ENCODE measurements at regions of chr1 and their contacts with region 1.

Region 1: DNA sequence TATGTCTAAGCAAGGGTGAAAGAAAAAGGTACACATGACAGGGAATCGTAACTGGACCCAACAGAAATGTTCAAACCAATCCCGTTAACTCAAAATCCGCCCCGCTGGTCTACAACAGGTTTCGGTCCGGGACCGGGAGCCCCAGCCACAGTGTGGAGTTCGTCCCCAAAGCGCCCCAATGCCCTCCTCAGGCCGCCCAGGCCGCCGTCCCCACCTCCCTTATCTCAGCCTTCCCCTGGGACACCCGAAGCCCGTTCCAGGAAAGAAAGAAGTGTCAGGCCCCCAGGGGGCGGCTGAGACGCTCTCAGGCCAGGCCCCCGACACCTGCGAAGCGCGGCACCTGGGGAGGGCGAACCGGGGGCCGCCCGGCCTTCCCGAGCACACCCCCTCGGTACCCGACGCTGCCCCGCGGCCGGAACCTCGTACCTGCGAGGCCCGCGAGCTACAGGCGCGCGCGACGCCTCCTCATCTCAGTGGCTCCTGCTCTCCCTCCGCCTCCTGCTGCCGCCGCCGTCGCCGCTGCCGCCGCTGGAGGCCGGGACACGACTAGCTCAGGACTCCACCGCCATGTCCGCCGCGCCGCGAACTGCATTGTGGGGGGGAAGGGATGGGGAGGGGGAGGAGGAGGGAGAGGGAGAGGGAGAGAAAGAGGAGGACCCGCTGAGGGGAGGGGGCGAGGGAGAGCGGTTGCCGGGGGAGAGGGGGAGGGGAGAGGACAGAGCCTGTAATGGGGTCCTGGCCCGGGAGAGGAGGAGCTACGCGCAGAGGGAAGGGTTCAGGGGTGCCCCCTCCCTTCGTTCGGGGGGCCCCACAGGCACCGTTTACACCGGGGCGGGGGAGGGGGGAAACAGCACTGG is at the start of gene TUT4:
- DNase-seq: peak; percentile 82 to 90 (median 85)
- ATAC-seq: peak; percentile 89 to 92 (median 91)
- H3K4me3 ChIP-seq: peak within 1 kb of the TSS; percentile 77 to 100 (median 98)
- H3K27ac ChIP-seq: peak within 1 kb of the TSS; percentile 48 to 96 (median 92)
- H3K4me1 ChIP-seq: peaks cover 0 to 30% (median 13%) of the 10 kb centered on the region in 12 donors
- H3K27me3 ChIP-seq: no peaks in the 10 kb centered on the region
- CTCF ChIP-seq: peak in 1 of 12 donors; percentile 32
- POLR2A ChIP-seq: peak in 1 of 2 donors; percentile 35
- total RNA-seq, gene TUT4: 23.7 to 43.8 (median 31.5) TPM

Region 2: GRCh38 chr1:52386458-52386857 is 166.3 kb before region 1 on chr1:
- intact Hi-C with region 1: no loop called
- DNase-seq: no peak
- ATAC-seq: no peak
- H3K4me3 ChIP-seq: no peak overlapping the region
- H3K27ac ChIP-seq: no peak overlapping the region
- H3K4me1 ChIP-seq: no peaks in the 10 kb centered on the region
- H3K27me3 ChIP-seq: no peaks in the 10 kb centered on the region
- CTCF ChIP-seq: no peak
- POLR2A ChIP-seq: no peak

Region 3: DNA sequence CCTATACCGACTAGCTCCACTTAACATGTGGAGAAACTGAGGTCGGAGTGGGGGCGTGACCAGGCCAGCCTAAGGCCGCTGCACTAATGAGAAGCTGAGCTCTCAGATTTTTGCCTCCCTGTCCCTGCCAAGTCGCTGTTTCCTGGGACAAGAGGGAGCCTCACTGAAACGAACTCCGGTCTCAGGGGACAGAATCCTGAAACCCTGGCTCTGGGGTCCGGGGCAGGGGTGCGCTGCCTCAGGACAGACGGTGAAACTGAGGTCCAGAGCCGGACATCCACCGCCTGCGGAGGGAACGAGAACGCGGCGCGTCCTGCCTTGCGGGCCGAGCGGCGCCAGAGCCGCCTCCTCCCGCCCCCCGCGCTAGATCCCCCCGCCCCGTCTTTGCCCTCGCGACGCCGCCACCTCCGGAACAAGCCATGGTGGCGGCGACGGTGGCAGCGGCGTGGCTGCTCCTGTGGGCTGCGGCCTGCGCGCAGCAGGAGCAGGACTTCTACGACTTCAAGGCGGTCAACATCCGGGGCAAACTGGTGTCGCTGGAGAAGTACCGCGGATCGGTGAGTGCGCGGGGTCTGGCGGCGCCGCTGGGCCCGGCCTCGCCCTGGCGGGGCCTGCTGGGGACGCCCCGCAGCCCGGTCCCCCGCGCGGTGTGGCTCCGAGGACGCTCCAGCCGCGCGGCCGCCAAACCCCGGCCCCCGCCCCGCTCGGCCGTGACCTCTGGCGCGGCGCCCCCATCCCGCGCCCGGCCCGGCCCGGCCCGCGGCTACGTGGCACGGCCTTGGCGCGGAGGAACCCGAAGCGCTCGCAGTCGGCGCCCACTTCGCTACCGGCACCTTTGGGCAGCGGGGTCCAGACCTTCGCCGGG is 49.5 kb after region 1 on chr1 and contains the start of gene GPX7:
- intact Hi-C with region 1: loop called in 8 of 10 experiments (anchors 2 to 10 kb)
- DNase-seq: peak; percentile 47 to 75 (median 59)
- ATAC-seq: peak; percentile 16 to 71 (median 64)
- H3K4me3 ChIP-seq: peak within 1 kb of the TSS; percentile 19 to 74 (median 66)
- H3K27ac ChIP-seq: peak within 1 kb of the TSS; percentile 69 to 90 (median 82)
- H3K4me1 ChIP-seq: peaks cover 0 to 37% (median 24%) of the 10 kb centered on the region in 12 donors
- H3K27me3 ChIP-seq: no peaks in the 10 kb centered on the region
- CTCF ChIP-seq: peak in 1 of 12 donors; percentile 11
- POLR2A ChIP-seq: no peak
- total RNA-seq, gene GPX7: 5.8 to 19.7 (median 8.2) TPM

Region 4: DNA sequence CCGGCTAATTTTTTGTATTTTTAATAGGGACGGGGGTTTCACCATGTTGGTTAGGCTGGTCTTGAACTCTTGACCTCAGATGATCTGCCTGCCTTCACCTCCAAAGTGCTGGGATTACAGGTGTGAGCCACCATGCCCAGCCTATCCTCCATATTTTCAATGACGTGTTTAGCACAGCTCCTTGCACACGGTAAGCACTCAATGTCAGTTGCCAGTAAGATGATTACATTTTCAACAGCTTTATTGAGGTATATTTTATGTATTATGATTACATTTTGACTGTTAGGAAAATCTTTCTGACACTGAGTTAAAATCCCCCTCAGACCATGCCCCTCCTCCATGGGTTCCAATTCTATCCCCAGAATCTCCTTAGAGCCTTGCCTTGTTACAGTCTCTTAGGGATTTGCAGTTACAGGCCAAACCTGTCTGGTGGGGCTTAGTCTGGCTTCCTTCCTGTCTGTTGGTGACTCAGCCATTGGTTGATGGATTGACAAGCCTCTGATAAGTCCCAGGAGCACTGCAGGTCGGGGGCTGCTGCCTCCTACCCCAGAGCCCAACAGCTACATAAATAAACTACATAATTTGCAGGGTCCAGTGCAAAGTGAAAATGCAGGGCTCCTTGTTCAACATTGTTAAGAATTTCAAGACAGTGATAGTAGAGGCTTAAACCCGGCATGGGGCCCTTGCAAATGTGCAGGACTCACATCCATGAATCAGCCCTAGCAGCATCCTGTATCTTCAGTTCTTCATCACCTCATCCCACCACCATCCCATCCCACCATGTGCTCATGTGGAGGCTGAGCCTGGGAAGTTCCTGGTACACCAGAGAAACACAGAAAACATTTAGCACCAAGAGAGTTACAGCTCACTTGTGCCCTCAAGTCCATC is 122.0 kb after region 1 on chr1:
- intact Hi-C with region 1: loop called in 1 of 10 experiments (anchors 10 kb)
- DNase-seq: no peak
- ATAC-seq: no peak
- H3K4me3 ChIP-seq: no peak overlapping the region
- H3K27ac ChIP-seq: no peak overlapping the region
- H3K4me1 ChIP-seq: peaks cover 0 to 19% (median 7%) of the 10 kb centered on the region in 12 donors
- H3K27me3 ChIP-seq: no peaks in the 10 kb centered on the region
- CTCF ChIP-seq: no peak
- POLR2A ChIP-seq: no peak

Region 5: GRCh38 chr1:52739699-52740467 is 187.2 kb after region 1 on chr1:
- intact Hi-C with region 1: no loop called
- DNase-seq: no peak
- ATAC-seq: peak in 3 of 4 donors; percentile 21 to 27 (median 23)
- H3K4me3 ChIP-seq: no peak overlapping the region
- H3K27ac ChIP-seq: peak overlapping the region in 10 of 12 donors; percentile 20 to 73 (median 58)
- H3K4me1 ChIP-seq: peaks cover 0 to 55% (median 28%) of the 10 kb centered on the region in 12 donors
- H3K27me3 ChIP-seq: no peaks in the 10 kb centered on the region
- CTCF ChIP-seq: no peak
- POLR2A ChIP-seq: no peak

Region 6: DNA sequence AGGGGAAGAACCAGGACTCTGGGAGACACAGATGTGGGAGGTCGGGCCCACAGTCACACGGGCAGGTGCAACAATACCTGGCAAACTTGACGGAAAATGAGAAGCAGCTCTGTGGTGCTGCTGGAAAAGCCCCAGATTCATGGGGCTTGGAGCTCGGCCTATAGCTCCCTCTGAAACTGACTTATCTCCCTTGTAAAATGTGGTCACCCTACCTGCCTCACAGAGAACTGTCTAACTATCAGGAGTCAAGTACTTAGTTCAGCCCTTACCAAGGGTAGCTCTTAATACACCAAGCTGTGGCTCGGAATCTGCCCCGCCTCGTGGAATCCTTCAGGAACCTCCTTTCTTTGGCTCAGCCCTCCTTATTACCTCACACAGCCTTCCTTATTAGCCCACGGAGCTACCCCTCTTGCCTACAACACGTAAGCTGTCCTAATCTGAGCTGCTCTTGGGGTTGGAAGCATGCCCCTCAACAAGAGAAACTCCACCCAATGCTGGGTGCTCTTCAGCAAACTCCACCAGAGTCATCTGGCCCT is 1716.1 kb after region 1 on chr1:
- intact Hi-C with region 1: no loop called
- DNase-seq: no peak
- ATAC-seq: no peak
- H3K4me3 ChIP-seq: no peak overlapping the region
- H3K27ac ChIP-seq: no peak overlapping the region
- H3K4me1 ChIP-seq: peaks cover 0 to 60% (median 29%) of the 10 kb centered on the region in 12 donors
- H3K27me3 ChIP-seq: no peaks in the 10 kb centered on the region
- CTCF ChIP-seq: no peak
- POLR2A ChIP-seq: no peak

Measured in heart left ventricle (tissue), 16 donors.